Right cardiac atrium (tissue), 5 donors: ENCODE measurements at regions of chr12 and their contacts with region 1.

Region 1: DNA sequence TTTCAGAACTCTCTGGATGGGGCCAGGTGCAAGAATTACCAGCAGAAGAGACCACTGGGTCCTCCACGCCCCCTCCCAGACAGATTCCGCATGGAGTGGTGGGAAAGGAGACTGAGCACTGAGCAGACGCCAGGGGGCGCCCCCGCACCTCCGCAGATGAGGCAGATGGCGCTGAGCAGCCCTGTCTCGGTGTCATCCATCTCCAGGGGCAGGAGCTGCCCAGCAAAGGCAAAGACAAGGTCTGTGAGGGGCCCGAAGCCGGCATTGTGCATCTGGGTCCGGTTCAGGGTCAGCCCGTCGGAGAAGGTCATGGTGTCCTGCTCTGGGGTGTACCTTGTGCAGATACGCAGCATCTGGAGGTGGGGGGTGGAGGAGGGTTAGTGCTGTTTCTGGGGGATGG is 6.3 kb upstream of the ITGB7 start:
- DNase-seq: peak; percentile 87 to 94 (median 94)
- ATAC-seq: peak; percentile 69 to 78
- H3K4me3 ChIP-seq: no peak overlapping the region
- H3K27ac ChIP-seq: peak overlapping the region; percentile 80
- H3K4me1 ChIP-seq: peaks cover 17% of the 10 kb centered on the region
- H3K27me3 ChIP-seq: no peaks in the 10 kb centered on the region

Region 2: DNA sequence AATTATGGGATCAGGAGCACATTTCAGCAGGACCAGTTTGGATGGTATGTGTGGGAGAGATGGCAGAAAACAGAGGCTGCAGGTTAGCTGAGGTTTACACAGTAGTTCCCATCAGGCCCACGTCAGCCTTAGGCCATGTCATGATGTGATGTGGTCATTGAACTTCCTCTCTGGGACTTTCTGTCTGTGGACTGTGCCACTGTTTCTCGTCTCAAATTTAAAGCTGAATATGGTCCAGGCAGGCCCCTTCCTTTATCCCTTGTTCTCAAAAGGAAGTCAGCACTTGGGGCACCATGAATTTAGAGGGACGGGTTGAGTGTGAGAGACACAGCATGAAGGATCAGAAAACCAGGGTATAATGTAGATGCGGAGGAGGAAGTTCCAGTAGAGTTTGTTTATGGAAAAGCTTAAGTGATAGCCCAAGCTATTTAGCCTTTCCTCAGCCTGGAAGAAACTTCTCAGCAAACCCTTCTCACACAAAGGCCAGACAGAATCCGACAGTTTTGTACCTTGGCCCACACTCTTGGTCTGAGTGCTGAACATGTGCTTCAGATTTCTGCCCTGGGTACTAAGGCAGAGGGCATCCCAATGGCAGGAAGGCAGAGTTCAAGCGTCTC is 119.5 kb before region 1 on chr12:
- intact Hi-C with region 1: no loop called
- DNase-seq: no peak
- ATAC-seq: no peak
- H3K4me3 ChIP-seq: no peak overlapping the region
- H3K27ac ChIP-seq: no peak overlapping the region
- H3K4me1 ChIP-seq: peaks cover 3% of the 10 kb centered on the region
- H3K27me3 ChIP-seq: no peaks in the 10 kb centered on the region

Region 3: DNA sequence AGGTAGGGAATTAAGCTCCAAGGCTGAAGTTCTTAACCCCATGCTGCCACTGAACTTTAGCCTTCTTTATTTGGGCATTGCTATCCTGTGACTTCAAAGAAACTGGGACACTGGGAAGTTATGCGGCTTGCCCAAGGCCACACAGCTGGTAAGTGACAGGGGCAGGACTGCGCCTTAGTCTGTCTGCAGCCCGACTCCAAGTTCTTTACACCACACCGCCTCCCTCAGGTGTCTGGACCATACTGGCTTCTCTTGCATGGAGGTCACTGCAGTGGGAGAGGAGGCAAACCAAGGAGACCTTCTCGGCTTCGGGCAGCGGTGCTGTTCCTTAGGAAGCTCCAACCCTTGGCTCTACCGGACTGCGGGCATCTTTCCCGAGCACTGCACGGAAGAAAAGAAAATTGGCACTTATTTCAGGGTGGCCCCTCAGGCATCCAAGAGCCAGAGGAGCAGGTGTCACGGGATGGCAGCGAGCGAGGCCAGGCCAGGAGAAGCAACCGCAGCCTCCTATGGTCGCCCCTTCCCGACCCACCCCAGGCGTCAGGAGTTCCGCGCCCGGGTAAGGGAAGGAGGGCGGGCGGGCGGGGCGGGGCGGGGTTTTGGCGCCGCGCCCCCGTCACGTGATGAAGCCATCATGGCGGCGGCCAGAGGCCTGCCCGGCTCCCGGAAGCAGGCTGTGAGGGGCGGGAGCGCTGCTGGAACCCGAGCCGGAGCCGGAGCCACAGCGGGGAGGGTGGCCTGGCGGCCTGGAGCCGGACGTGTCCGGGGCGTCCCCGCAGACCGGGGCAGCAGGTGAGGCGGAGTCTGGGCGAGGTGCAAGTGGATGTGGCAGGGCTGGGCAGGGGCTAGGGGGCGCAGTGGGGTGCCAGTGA is 38.4 kb after region 1 on chr12:
- intact Hi-C with region 1: loop called in 2 of 4 experiments (anchors 5 kb)
- DNase-seq: peak; percentile 86 to 93 (median 93)
- ATAC-seq: peak; percentile 95 to 96
- H3K4me3 ChIP-seq: peak overlapping the region; percentile 63
- H3K27ac ChIP-seq: peak overlapping the region; percentile 96
- H3K4me1 ChIP-seq: peaks cover 2% of the 10 kb centered on the region
- H3K27me3 ChIP-seq: no peaks in the 10 kb centered on the region

Region 4: GRCh38 chr12:53287741-53288216 is 74.4 kb after region 1 on chr12:
- intact Hi-C with region 1: loop called (anchors 2 to 5 kb)
- DNase-seq: peak; percentile 76 to 89 (median 89)
- ATAC-seq: peak; percentile 75 to 77
- H3K4me3 ChIP-seq: no peak overlapping the region
- H3K27ac ChIP-seq: no peak overlapping the region
- H3K4me1 ChIP-seq: no peaks in the 10 kb centered on the region
- H3K27me3 ChIP-seq: no peaks in the 10 kb centered on the region